Gastrocnemius medialis (tissue), 4 donors: ENCODE measurements at regions of chr7 and their contacts with region 1.

Region 1: DNA sequence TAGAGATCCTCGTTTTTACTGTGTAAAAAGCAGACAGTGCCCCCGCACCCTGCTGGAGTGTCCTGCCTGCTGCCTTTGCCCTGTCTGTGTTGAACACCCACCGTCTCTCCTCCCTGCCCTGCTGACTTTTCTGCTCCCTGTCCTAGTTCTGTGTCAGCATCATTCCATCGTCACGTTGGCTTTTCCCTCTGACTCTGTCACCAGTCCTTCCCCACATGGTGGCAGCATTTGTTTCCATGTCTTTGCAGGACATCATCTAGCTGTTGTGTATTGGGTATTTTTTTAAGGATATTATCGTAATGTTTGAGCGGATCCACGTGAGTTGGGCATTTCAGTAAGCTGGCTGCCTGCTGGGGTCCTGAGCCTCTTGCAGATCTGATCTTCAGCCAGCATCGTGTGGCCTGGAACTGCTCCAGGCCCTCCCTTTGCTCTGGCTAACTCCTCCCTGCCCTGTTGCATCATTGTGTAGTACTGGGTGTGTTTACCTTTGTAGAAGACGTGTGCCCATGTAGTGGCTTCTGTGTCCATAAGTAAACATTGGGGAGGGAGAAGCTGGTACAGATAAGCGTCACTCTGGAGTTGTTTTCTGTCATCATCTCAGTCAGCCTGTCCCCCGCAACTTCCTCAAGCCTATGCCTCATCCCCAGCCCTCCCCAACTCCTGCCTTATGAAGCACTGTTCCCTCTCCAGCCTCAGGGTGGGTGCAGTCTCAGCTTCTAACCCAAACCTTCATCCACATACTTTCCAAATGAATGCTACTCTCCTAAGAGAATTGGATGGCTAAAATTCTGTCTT is 44.3 kb downstream of the TRRAP start:
- DNase-seq: peak in 1 of 2 donors; percentile 18
- ATAC-seq: peak in 1 of 2 donors; percentile 66
- H3K4me3 ChIP-seq: no peak overlapping the region
- H3K27ac ChIP-seq: peak overlapping the region in 2 of 4 donors; percentile 14 to 36
- H3K4me1 ChIP-seq: no peaks in the 10 kb centered on the region
- H3K27me3 ChIP-seq: no peaks in the 10 kb centered on the region
- CTCF ChIP-seq: no peak
- POLR2A ChIP-seq: no peak

Region 2: GRCh38 chr7:98869027-98869596 is 53.5 kb before region 1 on chr7:
- in situ Hi-C with region 1: no loop called
- intact Hi-C with region 1: no loop called
- DNase-seq: no peak
- ATAC-seq: no peak
- H3K4me3 ChIP-seq: peak overlapping the region in 1 of 4 donors; percentile 43
- H3K27ac ChIP-seq: no peak overlapping the region
- H3K4me1 ChIP-seq: no peaks in the 10 kb centered on the region
- H3K27me3 ChIP-seq: peaks cover 15 to 23% (median 22%) of the 10 kb centered on the region in 3 donors
- CTCF ChIP-seq: no peak
- POLR2A ChIP-seq: no peak

Region 3: GRCh38 chr7:99325545-99326407 is 403.2 kb after region 1 on chr7 and contains the start of gene ARPC1A:
- in situ Hi-C with region 1: no loop called
- intact Hi-C with region 1: loop called (anchors 10 kb)
- DNase-seq: peak; percentile 82 to 88
- ATAC-seq: peak; percentile 93 to 97
- H3K4me3 ChIP-seq: peak within 1 kb of the TSS; percentile 97 to 99 (median 98)
- H3K27ac ChIP-seq: peak within 1 kb of the TSS; percentile 88 to 95 (median 94)
- H3K4me1 ChIP-seq: peaks cover 53 to 54% of the 10 kb centered on the region in 2 donors
- H3K27me3 ChIP-seq: no peaks in the 10 kb centered on the region
- CTCF ChIP-seq: peak; percentile 28 to 39 (median 30)
- POLR2A ChIP-seq: peak; percentile 60 to 76
- total RNA-seq, gene ARPC1A: 37.0 to 58.8 (median 44.1) TPM